ENCODE measurements at regions of chr1 and their contacts with region 1.

Region 1: GRCh38 chr1:33080885-33081553 is at the start of gene AZIN2:
- DNase-seq: peak; percentile 98
- ATAC-seq: peak; percentile 97
- H3K4me3 Mint-ChIP-seq: peak within 1 kb of the TSS; percentile 79
- H3K27ac Mint-ChIP-seq: no peak within 1 kb of the TSS
- H3K4me1 Mint-ChIP-seq: peaks cover 12% of the 10 kb centered on the region
- H3K27me3 Mint-ChIP-seq: peaks cover 72% of the 10 kb centered on the region
- CTCF ChIP-seq: no peak
- total RNA-seq, gene AZIN2: 0.89 to 1.7 TPM (median 1.1 TPM) in 3 replicates

Region 2: DNA sequence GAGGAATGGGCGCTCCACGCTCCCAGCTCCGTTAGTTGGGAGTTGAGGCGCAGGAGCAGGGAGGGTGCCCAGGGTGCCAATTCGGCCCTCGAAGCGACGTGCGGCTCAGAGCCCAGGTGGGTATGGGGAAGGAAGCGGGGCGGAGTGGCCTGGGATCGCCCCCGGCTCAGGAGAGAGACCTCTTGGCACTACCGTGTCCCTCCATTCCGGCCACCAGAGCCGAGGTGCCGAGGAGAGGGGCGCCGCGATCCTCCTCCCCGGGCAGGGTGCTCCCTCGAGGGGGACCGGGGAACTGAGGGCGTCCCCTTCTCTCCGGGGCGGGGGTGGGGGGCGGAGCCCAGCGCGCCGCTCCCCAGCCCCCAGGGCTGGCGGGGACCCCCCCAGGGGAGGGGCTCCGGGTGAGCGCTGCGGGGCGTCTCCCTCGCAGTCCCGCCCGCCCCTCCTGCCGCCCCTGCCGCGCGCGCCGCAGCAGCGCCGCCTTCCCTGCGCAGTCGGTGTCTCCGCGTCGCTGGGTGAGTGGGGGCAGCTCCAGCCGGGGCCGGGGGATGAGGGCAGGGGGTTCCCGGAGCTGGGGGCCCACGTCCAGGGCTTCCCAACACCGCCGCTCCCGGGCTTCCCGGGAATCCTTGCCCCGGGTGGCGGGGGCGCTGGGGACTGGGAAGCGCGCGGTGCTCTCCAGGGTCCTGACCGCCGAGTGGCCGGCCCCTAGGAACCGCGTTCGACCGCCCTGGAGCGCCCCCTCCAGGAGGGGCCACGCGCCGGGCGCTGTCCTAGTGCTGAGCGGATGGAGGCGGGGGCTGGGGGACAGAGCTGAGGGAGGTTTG is 194.8 kb before region 1 on chr1 and contains the start of gene HPCA:
- CTCF ChIA-PET with region 1: interaction called, 12 read pairs
- POLR2A ChIA-PET with region 1: no interaction called
- DNase-seq: peak; percentile 90
- ATAC-seq: peak; percentile 94
- H3K4me3 Mint-ChIP-seq: peak within 1 kb of the TSS; percentile 65
- H3K27ac Mint-ChIP-seq: no peak within 1 kb of the TSS
- H3K4me1 Mint-ChIP-seq: peaks cover 12% of the 10 kb centered on the region
- H3K27me3 Mint-ChIP-seq: peaks cover 74% of the 10 kb centered on the region
- CTCF ChIP-seq: peak; percentile 30; the same call in 1 of the 2 replicates
- total RNA-seq, gene HPCA: 1.5 to 2.2 TPM (median 1.9 TPM) in 3 replicates

Region 3: DNA sequence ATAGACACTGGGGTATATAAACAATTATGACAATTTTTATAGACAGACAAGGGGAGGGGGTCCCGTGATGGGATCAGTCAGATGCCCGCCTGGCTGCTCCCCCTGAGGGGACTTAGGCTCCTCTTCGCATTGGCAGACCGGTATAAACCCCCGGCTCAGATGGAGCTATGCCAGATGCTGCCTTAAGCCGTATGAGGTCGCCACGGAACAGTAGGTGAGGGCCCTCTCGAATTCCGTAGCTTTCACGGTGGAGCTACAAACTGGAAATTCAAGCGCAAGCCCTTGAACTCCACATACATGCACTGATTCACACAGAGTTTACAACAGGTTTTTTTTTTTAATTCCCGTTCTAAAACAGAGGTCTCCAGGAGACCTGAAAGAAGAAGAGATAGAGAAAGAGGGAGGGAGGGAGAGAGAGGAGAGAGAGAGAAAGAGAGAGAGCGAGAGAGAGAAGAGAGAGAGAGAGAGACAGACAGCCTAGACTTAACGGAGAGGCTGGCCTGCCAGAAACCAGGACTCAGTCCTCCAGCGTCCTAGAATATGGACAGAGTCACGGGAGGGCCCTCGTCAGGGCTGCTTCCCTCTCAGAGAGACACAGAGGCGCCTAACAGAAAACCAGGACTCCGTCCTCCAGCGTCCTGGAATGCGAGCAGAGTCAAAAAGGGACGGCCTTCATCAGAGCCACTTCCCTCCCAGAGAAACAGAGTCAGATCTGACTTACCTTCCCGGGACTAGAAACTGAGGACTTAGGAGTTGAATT is 155.4 kb before region 1 on chr1:
- CTCF ChIA-PET with region 1: interaction called, 29 read pairs
- POLR2A ChIA-PET with region 1: interaction called, 4 read pairs
- DNase-seq: peak; percentile 53
- ATAC-seq: peak; percentile 87
- H3K4me3 Mint-ChIP-seq: peak overlapping the region; percentile 85
- H3K27ac Mint-ChIP-seq: no peak overlapping the region
- H3K4me1 Mint-ChIP-seq: peaks cover 21% of the 10 kb centered on the region
- H3K27me3 Mint-ChIP-seq: peaks cover 84% of the 10 kb centered on the region
- CTCF ChIP-seq: no peak

Region 4: GRCh38 chr1:33094971-33095604 is 14.1 kb after region 1 on chr1:
- CTCF ChIA-PET with region 1: interaction called, 21 read pairs
- POLR2A ChIA-PET with region 1: no interaction called
- DNase-seq: peak; percentile 82
- ATAC-seq: peak; percentile 38
- H3K4me3 Mint-ChIP-seq: no peak overlapping the region
- H3K27ac Mint-ChIP-seq: no peak overlapping the region
- H3K4me1 Mint-ChIP-seq: peaks cover 16% of the 10 kb centered on the region
- H3K27me3 Mint-ChIP-seq: peaks cover 21% of the 10 kb centered on the region
- CTCF ChIP-seq: peak; percentile 97